Activated CD4-positive, alpha-beta T cell treated with anti-CD3 and anti-CD28 coated beads for 36 hours (primary cell): ENCODE measurements at regions of chr11 and their contacts with region 1.

Region 1: GRCh38 chr11:61429691-61430582 is at the starts of genes CPSF7 and SDHAF2:
- DNase-seq: peak; percentile 99
- ATAC-seq: peak; percentile 92
- H3K4me3 Mint-ChIP-seq: peak within 1 kb of the TSS; percentile 92
- H3K27ac Mint-ChIP-seq: peak within 1 kb of the TSS; percentile 97
- H3K4me1 Mint-ChIP-seq: peaks cover 59% of the 10 kb centered on the region
- H3K27me3 Mint-ChIP-seq: no peaks in the 10 kb centered on the region
- total RNA-seq, gene CPSF7: 108 to 179 TPM
- total RNA-seq, gene SDHAF2: 23.6 to 33.6 TPM

Region 2: DNA sequence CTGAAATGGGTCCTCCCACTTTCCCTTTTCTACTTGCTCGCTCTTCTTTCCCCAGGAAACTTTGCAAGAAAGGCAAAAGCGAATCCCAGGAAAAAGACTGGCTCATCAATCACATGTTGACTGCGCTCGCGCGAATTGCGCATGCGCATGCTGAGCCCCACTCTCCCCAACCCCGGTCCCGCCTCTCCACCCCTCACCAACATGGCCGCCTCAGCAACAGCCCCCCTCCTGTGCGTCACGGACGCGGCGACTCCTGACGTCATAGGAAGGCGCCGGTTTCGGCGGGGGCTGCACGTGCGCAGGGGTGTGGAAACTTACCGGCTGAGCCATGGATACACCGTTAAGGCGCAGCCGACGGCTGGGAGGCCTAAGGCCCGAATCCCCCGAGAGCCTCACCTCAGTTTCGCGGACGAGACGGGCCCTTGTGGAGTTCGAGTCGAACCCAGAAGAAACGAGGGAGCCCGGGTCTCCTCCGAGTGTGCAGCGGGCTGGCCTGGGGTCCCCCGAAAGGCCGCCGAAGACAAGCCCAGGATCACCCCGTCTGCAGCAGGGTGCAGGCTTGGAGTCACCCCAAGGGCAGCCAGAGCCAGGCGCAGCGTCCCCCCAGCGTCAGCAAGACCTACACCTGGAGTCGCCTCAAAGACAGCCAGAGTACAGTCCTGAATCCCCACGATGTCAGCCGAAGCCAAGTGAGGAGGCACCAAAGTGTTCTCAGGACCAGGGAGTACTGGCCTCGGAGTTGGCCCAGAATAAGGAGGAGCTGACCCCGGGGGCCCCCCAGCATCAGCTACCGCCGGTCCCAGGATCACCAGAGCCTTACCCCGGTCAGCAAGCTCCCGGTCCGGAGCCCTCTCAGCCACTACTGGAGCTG is 587.9 kb before region 1 on chr11 and contains the start of gene CCDC86:
- CTCF ChIA-PET with region 1: no interaction called
- POLR2A ChIA-PET with region 1: no interaction called
- intact Hi-C with region 1: loop called in 1 of 2 experiments (anchors 1 kb)
- DNase-seq: peak; percentile 98
- ATAC-seq: peak; percentile 95
- H3K4me3 Mint-ChIP-seq: peak within 1 kb of the TSS; percentile 83
- H3K27ac Mint-ChIP-seq: peak within 1 kb of the TSS; percentile 96
- H3K4me1 Mint-ChIP-seq: peaks cover 38% of the 10 kb centered on the region
- H3K27me3 Mint-ChIP-seq: no peaks in the 10 kb centered on the region
- total RNA-seq, gene CCDC86: 52.1 to 75.1 TPM

Region 3: GRCh38 chr11:61361686-61362541 is 68.0 kb before region 1 on chr11 and contains the starts of genes CYB561A3 and TMEM138:
- CTCF ChIA-PET with region 1: interaction called, 5 read pairs
- POLR2A ChIA-PET with region 1: interaction called, 19 read pairs
- intact Hi-C with region 1: loop called (anchors 1 to 2 kb)
- DNase-seq: peak; percentile 95
- ATAC-seq: peak; percentile 96
- H3K4me3 Mint-ChIP-seq: peak within 1 kb of the TSS; percentile 100
- H3K27ac Mint-ChIP-seq: peak within 1 kb of the TSS; percentile 100
- H3K4me1 Mint-ChIP-seq: peaks cover 34% of the 10 kb centered on the region
- H3K27me3 Mint-ChIP-seq: no peaks in the 10 kb centered on the region
- total RNA-seq, gene CYB561A3: 31.8 to 34.4 TPM
- total RNA-seq, gene TMEM138: 38.6 to 56.5 TPM

Region 4: GRCh38 chr11:61378713-61379313 is 51.1 kb before region 1 on chr11:
- CTCF ChIA-PET with region 1: no interaction called
- POLR2A ChIA-PET with region 1: no interaction called
- intact Hi-C with region 1: no loop called
- DNase-seq: no peak
- ATAC-seq: no peak
- H3K4me3 Mint-ChIP-seq: no peak overlapping the region
- H3K27ac Mint-ChIP-seq: no peak overlapping the region
- H3K4me1 Mint-ChIP-seq: no peaks in the 10 kb centered on the region
- H3K27me3 Mint-ChIP-seq: no peaks in the 10 kb centered on the region

Region 5: GRCh38 chr11:61446211-61446651 is 16.3 kb after region 1 on chr11:
- CTCF ChIA-PET with region 1: interaction called, 128 read pairs
- POLR2A ChIA-PET with region 1: interaction called, 3 read pairs
- intact Hi-C with region 1: no loop called
- DNase-seq: peak; percentile 95
- ATAC-seq: peak; percentile 87
- H3K4me3 Mint-ChIP-seq: no peak overlapping the region
- H3K27ac Mint-ChIP-seq: peak overlapping the region; percentile 44
- H3K4me1 Mint-ChIP-seq: peaks cover 35% of the 10 kb centered on the region
- H3K27me3 Mint-ChIP-seq: no peaks in the 10 kb centered on the region

Region 6: DNA sequence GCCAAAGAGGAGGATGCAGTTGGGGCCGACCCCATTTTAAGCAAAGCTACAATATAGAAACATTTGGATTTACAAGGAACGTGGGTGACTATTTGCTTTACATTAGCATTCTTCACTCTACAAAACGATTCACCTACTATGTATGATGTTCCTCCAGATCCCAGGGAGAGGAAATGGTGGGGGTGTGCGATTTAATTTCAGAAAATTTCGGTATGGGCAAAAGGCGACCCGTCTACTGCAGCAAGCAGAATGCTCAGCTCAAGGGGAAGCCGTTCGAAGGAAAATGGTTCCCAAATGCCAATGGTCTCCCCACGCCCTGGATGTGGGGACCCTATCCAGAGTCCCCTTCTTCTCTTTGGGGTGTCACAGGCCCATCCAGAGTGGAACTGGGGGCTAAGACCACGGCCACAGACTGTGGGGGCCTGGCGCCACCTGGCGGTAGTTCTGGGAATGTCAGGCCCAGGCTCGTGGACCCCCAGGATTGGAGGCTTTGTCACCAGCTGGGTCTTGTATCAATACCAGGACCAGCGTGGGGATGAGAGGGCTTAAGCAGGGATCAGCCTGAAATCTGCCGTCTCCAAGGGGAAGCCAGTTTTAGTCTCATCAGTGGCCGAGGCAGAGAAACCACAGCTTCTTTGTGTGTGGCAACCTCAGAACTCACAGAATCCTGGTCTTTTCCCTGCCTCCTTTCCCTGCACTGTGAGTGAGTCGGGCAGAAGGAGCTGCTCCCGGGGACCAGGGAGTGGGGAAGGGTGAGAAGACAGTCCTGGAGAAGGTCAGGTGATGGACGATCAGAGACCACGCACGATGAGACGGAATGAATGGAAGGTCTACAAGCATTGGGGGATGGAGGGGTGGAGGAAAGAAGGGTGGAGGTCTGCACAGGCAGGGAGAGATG is 87.0 kb after region 1 on chr11:
- CTCF ChIA-PET with region 1: interaction called, 15 read pairs
- POLR2A ChIA-PET with region 1: interaction called, 3 read pairs
- intact Hi-C with region 1: no loop called
- DNase-seq: peak; percentile 72
- ATAC-seq: peak; percentile 69
- H3K4me3 Mint-ChIP-seq: peak overlapping the region; percentile 2
- H3K27ac Mint-ChIP-seq: no peak overlapping the region
- H3K4me1 Mint-ChIP-seq: peaks cover 6% of the 10 kb centered on the region
- H3K27me3 Mint-ChIP-seq: peaks cover 15% of the 10 kb centered on the region